Endothelial cell of umbilical vein (primary cell): ENCODE measurements at regions of chr4 and their contacts with region 1.

Region 1: DNA sequence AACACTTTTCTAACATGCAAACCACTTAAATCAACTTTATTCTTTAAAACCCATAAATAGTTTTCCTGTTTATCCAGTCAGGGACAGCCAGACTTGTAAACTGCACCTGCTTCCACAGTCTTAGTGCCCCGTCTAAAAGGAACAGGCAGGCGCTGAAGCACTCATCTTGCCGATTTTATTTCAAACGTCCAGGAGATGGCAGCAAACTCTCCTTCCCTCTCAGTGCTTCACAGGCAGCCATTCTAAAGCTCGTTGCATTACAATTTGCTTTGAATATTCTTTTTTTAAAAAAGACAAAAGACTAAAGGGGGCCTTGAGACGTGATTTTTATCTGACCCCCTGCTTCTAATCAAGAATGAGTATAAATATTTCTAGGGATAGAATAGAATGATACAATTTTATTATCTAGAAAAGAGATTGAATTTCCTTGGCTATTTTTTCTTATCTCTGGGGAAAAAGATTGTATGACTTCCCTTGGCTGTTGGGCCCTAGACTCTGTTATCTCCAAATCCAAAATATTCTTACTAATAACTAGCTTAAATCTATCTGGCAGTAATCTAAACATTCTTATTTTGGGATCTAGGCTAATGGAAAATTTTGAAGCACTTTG is 93.6 kb upstream of the MYOZ2 start:
- DNase-seq: peak; percentile 86
- H3K4me3 ChIP-seq: no peak overlapping the region
- H3K27ac ChIP-seq: no peak overlapping the region
- H3K4me1 ChIP-seq: peaks cover 15% of the 10 kb centered on the region
- H3K27me3 ChIP-seq: no peaks in the 10 kb centered on the region
- CTCF ChIP-seq: peak; percentile 50
- POLR2A ChIP-seq: no peak

Region 2: DNA sequence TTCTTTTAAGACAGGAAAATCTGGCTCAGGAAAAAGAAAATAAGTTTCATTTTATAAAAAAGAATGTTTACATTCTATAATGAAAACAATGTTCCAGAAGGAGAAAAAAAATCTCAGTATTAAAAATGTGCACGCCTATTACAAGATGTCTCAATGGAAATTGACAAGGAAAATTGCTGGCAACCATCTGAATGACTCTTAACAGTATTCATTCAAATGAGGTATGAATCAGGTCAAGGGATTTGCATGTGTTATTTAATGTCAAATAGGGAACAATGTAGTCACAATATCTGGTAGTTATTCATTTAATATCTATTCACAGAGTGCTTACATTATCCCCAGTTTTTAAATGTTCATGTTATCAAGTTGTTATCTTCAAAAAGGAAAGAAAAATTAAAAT is 1748.3 kb before region 1 on chr4:
- CTCF ChIA-PET with region 1: no interaction called
- POLR2A ChIA-PET with region 1: no interaction called
- dilution Hi-C with region 1: no loop called
- intact Hi-C with region 1: no loop called
- DNase-seq: no peak
- H3K4me3 ChIP-seq: no peak overlapping the region
- H3K27ac ChIP-seq: no peak overlapping the region
- H3K4me1 ChIP-seq: no peaks in the 10 kb centered on the region
- H3K27me3 ChIP-seq: no peaks in the 10 kb centered on the region
- CTCF ChIP-seq: no peak
- POLR2A ChIP-seq: no peak

Region 3: DNA sequence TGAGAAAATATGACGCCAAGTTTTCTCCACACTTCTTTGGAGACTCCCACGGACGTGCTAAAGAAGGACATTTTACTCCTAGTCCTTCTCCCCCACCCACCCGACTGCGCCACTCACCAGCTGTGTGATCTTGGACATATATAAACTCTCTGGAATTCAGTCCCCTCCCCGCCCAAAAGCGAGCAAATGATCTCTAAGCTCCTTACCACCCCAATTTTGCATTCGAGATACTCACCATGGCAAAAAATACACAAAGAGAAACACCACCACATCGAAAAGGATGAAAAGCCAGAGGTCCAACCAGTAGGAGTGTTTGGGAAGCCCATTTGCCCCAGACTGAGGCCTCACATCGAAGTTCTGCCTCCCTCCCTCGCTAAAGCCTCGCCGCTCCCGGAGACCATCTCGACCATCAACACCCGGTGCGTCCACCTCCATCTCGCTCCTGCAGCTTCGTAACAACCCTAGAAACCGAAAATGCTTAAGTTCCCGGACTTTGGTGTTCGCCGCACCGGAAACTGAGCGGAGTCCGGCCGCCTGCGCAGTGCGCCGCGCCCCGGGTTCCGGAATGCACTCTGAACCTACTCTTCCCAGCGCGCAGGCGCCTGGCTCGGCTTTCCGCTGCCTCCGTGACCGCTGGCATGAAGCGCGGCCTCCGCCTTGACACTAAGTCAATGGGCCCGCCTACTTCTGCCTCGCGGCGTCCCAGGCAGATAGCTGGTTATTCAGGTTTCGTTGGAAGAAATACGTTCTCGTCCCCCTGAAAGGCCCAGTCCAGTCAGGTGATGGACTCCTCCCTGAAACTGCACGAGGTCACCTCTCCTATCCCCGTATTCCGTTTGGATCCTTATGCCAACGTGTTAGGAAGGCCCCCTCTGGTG is 258.3 kb after region 1 on chr4:
- CTCF ChIA-PET with region 1: interaction called, 10 read pairs
- POLR2A ChIA-PET with region 1: no interaction called
- dilution Hi-C with region 1: no loop called
- intact Hi-C with region 1: loop called (anchors 1 kb)
- DNase-seq: peak; percentile 89
- H3K4me3 ChIP-seq: peak overlapping the region; percentile 49 to 82 (median 76)
- H3K27ac ChIP-seq: peak overlapping the region; percentile 60
- H3K4me1 ChIP-seq: peaks cover 12% of the 10 kb centered on the region
- H3K27me3 ChIP-seq: no peaks in the 10 kb centered on the region
- CTCF ChIP-seq: peak in 1 of 2 donors; percentile 1
- POLR2A ChIP-seq: peak; percentile 78